Activated CD8-positive, alpha-beta T cell treated with anti-CD3 and anti-CD28 coated beads for 36 hours (primary cell): ENCODE measurements at regions of chr4 and their contacts with region 1.

Region 1: GRCh38 chr4:103091601-103092223 is 7.9 kb downstream of the BDH2 start:
- DNase-seq: peak; percentile 61
- ATAC-seq: peak; percentile 78
- H3K4me3 Mint-ChIP-seq: no peak overlapping the region
- H3K27ac Mint-ChIP-seq: peak overlapping the region; percentile 53
- H3K4me1 Mint-ChIP-seq: peaks cover 17% of the 10 kb centered on the region
- H3K27me3 Mint-ChIP-seq: no peaks in the 10 kb centered on the region
- CTCF ChIP-seq: peak; percentile 79

Region 2: DNA sequence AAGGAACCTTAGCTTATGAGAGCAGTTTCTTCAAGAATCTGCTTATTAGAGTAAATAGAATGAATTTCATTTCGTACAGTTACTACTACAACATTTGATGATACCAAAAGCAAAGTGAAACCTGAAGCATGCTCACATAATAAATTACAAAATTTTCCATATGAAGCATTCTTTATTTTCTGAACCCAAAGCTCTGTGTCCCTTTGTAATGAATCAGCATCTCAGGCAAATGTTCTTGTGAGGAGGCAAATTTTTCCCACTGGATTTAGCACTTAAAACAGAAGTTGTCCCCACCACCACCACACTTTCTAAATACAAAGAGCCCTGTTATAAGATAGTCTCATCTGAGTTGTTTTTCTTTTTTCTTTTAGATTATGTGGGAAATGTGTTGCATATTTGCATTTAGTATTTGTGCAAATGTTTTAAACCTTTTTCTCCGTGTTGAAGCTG is 661.2 kb before region 1 on chr4:
- CTCF ChIA-PET with region 1: interaction called, 10 read pairs
- POLR2A ChIA-PET with region 1: no interaction called
- intact Hi-C with region 1: loop called (anchors 10 kb)
- DNase-seq: no peak
- ATAC-seq: no peak
- H3K4me3 Mint-ChIP-seq: peak overlapping the region; percentile 84
- H3K27ac Mint-ChIP-seq: peak overlapping the region; percentile 88
- H3K4me1 Mint-ChIP-seq: peaks cover 11% of the 10 kb centered on the region
- H3K27me3 Mint-ChIP-seq: no peaks in the 10 kb centered on the region
- CTCF ChIP-seq: no peak

Region 3: GRCh38 chr4:103046416-103047290 is 45.1 kb before region 1 on chr4:
- CTCF ChIA-PET with region 1: interaction called, 78 read pairs
- POLR2A ChIA-PET with region 1: no interaction called
- intact Hi-C with region 1: loop called (anchors 5 kb)
- DNase-seq: peak; percentile 37
- ATAC-seq: peak; percentile 95
- H3K4me3 Mint-ChIP-seq: no peak overlapping the region
- H3K27ac Mint-ChIP-seq: no peak overlapping the region
- H3K4me1 Mint-ChIP-seq: peaks cover 10% of the 10 kb centered on the region
- H3K27me3 Mint-ChIP-seq: no peaks in the 10 kb centered on the region
- CTCF ChIP-seq: peak; percentile 75

Region 4: DNA sequence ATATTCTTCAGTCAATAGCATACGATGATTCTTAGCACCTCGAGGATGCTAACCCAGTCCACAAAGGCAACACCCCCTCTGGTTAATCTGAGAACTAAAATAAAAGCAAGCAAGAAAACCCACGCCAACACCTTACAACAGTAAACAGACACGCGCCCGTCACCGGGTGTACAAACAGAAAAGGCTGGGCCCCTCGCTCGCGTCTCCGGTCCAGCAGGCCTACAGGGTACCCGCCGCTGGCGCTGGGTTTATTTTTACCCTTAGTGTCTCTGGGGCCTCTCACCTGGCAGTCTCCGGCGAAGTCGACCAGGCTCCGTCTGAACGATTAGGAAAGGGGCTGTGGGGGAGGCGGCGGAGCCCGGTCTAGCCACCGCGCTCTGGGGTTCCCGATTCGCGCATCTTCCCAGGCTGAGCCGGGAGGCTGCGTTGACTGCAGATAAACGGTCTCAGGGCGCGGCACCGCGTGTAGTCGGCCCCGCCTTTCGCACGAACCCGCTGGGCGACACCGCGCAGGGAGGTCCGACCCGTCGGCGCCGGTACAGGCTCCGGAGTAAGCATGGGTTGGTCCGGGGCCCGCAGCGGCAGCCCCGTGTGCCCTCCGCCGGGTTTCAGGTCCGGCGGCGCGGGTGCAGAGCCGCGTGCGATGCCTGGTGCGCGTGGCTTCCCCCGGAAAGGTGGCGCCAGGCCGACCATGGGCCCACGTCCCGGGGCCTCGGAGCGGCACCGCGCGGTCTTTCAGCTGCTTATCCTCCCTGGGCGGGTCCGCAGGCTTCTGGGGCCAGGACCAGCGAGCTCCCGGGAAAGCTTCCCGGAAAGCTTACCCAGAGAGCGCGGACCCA is 15.6 kb before region 1 on chr4:
- CTCF ChIA-PET with region 1: interaction called, 71 read pairs
- POLR2A ChIA-PET with region 1: interaction called, 8 read pairs
- intact Hi-C with region 1: no loop called
- DNase-seq: peak; percentile 74
- ATAC-seq: peak; percentile 66
- H3K4me3 Mint-ChIP-seq: peak overlapping the region; percentile 91
- H3K27ac Mint-ChIP-seq: peak overlapping the region; percentile 99
- H3K4me1 Mint-ChIP-seq: peaks cover 42% of the 10 kb centered on the region
- H3K27me3 Mint-ChIP-seq: no peaks in the 10 kb centered on the region
- CTCF ChIP-seq: no peak

Region 5: GRCh38 chr4:103324811-103325210 is 233.1 kb after region 1 on chr4:
- CTCF ChIA-PET with region 1: no interaction called
- POLR2A ChIA-PET with region 1: no interaction called
- intact Hi-C with region 1: no loop called
- DNase-seq: no peak
- ATAC-seq: no peak
- H3K4me3 Mint-ChIP-seq: no peak overlapping the region
- H3K27ac Mint-ChIP-seq: no peak overlapping the region
- H3K4me1 Mint-ChIP-seq: no peaks in the 10 kb centered on the region
- H3K27me3 Mint-ChIP-seq: peaks cover 1% of the 10 kb centered on the region
- CTCF ChIP-seq: no peak